Psoas muscle (tissue), 8 donors: ENCODE measurements at regions of chr3 and their contacts with region 1.

Region 1: GRCh38 chr3:152268555-152269425 is at the start of gene MBNL1:
- DNase-seq: peak; percentile 77 to 86
- ATAC-seq: peak; percentile 67 to 78 (median 68)
- H3K4me3 ChIP-seq: peak within 1 kb of the TSS; percentile 91
- H3K27ac ChIP-seq: peak within 1 kb of the TSS; percentile 99
- H3K4me1 ChIP-seq: peaks cover 35% of the 10 kb centered on the region
- H3K27me3 ChIP-seq: no peaks in the 10 kb centered on the region
- CTCF ChIP-seq: no peak
- total RNA-seq, gene MBNL1: 179 to 281 (median 242) TPM

Region 2: DNA sequence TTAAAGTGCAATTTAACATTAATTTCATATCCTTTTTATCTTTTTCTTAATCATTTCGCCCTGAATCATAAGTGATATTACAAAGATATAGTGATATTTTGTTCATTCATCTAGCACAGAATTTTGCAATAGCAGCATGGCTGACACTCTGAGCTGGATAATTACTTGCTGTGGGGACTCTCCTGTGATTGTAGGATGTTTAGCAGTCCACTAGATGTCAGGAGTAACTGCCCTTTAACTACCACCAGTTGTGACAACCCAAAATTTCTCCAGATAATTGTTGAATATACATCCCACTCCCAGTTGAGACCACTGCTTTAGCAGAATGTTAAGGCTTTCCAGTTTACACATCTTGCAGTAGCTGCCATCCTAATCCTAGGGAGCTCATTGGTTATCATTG is 196.9 kb before region 1 on chr3:
- intact Hi-C with region 1: loop called in 1 of 2 experiments (anchors 10 kb)
- DNase-seq: no peak
- ATAC-seq: peak; percentile 62 to 92 (median 72)
- H3K4me3 ChIP-seq: no peak overlapping the region
- H3K27ac ChIP-seq: no peak overlapping the region
- H3K4me1 ChIP-seq: peaks cover 10% of the 10 kb centered on the region
- H3K27me3 ChIP-seq: no peaks in the 10 kb centered on the region
- CTCF ChIP-seq: peak; percentile 58

Region 3: GRCh38 chr3:152196782-152197181 is 72.0 kb before region 1 on chr3:
- intact Hi-C with region 1: loop called (anchors 2 to 5 kb)
- DNase-seq: no peak
- ATAC-seq: no peak
- H3K4me3 ChIP-seq: peak overlapping the region; percentile 62
- H3K27ac ChIP-seq: peak overlapping the region; percentile 86
- H3K4me1 ChIP-seq: peaks cover 27% of the 10 kb centered on the region
- H3K27me3 ChIP-seq: no peaks in the 10 kb centered on the region
- CTCF ChIP-seq: no peak

Region 4: GRCh38 chr3:152302521-152303021 is 33.8 kb after region 1 on chr3:
- intact Hi-C with region 1: loop called in 1 of 2 experiments (anchors 5 kb)
- DNase-seq: peak; percentile 40 to 70
- ATAC-seq: peak; percentile 70 to 82 (median 76)
- H3K4me3 ChIP-seq: peak overlapping the region; percentile 70
- H3K27ac ChIP-seq: peak overlapping the region; percentile 94
- H3K4me1 ChIP-seq: peaks cover 54% of the 10 kb centered on the region
- H3K27me3 ChIP-seq: no peaks in the 10 kb centered on the region
- CTCF ChIP-seq: no peak

Region 5: DNA sequence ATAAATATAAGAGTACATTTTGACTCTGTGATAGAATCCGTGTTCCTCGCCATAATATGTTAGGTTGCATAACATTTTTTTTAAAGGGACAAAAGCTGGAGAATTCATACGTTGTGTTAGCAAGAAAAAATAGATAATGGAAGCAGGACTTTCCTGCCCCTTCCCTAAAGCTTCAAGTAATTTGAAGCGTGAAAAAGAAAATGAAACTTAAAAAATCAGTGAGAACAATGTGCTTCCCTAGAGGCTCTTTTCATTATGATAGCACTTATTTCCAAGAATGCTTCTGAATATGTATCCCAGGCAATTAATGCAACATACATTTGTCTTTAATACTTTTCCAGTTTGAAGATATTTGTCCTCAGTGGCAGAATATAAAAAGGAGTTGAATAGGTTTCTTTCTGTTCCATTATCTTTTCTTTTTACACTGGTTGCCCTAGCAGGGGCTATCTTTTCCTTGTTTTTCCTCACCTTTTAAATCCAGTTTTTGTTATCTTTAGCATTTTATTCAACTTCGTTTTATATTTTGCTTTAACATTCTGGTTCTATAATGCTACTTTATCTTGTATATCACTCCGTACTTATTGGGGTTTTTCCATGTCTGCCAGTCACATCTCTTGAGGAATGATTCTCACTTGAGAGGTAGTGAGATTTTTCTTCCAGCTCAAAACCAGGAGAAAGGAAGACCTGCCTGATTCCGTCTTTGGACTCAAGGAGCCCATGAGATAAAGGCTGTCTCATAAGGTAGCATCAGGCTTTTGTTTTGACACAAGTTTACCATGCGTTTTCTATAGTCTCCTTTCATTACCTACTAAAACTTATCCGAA is 113.7 kb after region 1 on chr3:
- intact Hi-C with region 1: loop called in 1 of 2 experiments (anchors 5 kb)
- DNase-seq: no peak
- ATAC-seq: peak in 3 of 4 donors; percentile 11 to 18 (median 17)
- H3K4me3 ChIP-seq: peak overlapping the region; percentile 61
- H3K27ac ChIP-seq: peak overlapping the region; percentile 82
- H3K4me1 ChIP-seq: peaks cover 78% of the 10 kb centered on the region
- H3K27me3 ChIP-seq: no peaks in the 10 kb centered on the region
- CTCF ChIP-seq: no peak